Mammary epithelial cell (primary cell): ENCODE measurements at regions of chr17 and their contacts with region 1.

Region 1: DNA sequence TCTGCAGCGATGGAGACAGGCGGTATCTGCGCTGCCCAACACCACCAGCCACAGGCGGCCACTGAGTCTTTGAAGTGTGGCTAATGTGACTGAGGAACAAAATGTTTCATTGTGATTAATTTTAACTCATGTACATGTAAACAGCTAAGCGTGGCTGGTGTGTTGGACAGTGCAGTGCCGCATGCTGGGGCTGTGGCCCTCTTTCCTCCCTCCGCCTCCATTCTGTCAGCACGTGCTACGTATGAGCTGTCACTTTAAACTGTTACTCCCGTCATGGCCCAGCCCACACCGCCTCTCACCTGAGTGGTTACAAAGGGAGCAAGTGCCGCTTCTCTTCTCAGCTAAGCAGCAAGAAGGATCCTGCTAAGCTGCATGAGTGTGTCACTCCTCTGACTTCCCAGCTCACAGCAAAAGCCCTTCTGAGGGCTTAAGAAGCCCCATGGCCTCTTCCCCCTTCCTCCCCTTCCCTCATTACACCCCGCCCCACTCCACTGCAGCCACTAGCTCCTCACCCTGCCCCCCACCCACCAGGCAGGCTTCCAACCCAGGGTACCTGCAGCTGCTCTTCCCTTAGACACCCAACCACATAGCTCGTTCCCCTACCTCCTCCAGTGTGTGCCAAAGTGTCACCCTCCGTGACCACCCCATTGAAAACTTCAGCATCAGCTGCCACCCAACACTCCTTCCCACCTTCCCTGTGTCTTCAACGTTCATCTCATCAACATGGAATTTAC is 15.0 kb downstream of the HASPIN start:
- DNase-seq: peak; percentile 76
- H3K4me3 ChIP-seq: peak overlapping the region in 1 of 3 experiments; percentile 19
- H3K27ac ChIP-seq: no peak overlapping the region
- H3K4me1 ChIP-seq: peaks cover 10% of the 10 kb centered on the region
- H3K27me3 ChIP-seq: no peaks in the 10 kb centered on the region
- CTCF ChIP-seq: no peak

Region 2: DNA sequence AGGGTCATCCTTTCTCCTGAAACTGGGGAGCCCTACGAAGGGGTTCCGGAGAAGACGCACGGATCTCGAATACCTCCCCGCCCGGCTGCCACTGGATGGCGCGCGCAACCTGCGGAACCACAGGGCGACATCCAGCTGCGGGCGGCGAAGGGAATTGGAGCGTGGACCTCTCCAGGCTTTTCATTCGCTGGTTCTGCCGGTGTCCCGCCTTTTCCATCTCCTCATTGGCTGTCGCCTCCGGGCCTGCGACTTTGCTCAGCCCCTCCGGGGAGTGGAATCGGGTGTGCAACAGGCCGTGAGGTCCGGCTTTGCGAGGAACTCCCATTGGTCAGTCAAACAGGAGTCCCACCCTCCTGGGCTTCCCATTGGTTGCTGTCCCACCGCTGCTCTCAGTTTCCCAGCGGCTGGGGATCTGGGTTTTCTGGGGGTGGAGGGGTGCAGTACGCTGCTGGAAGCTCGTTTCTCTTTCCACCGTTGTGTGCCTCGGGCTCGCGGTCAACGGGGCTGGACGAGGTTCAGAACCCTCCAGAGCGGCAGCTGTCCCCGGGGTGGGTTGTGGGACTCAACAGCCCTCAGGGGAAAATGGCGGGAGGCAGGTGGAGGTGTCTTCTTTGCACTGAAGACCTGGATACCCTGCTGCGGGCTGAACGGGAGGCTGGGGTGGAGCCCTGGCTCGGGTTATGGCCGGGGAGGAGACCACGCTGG is 689.8 kb before region 1 on chr17:
- CTCF ChIA-PET with region 1: no interaction called
- dilution Hi-C with region 1: no loop called
- in situ Hi-C with region 1: loop called in 1 of 2 experiments (anchors 10 kb)
- intact Hi-C with region 1: no loop called
- DNase-seq: peak; percentile 96
- H3K4me3 ChIP-seq: peak overlapping the region; percentile 84 to 89 (median 86)
- H3K27ac ChIP-seq: peak overlapping the region; percentile 3
- H3K4me1 ChIP-seq: peaks cover 10% of the 10 kb centered on the region
- H3K27me3 ChIP-seq: no peaks in the 10 kb centered on the region
- CTCF ChIP-seq: peak; percentile 66 to 90

Region 3: GRCh38 chr17:3683054-3683511 is 55.6 kb before region 1 on chr17:
- CTCF ChIA-PET with region 1: no interaction called
- dilution Hi-C with region 1: no loop called
- in situ Hi-C with region 1: no loop called
- intact Hi-C with region 1: loop called (anchors 2 kb)
- DNase-seq: peak; percentile 19
- H3K4me3 ChIP-seq: no peak overlapping the region
- H3K27ac ChIP-seq: no peak overlapping the region
- H3K4me1 ChIP-seq: no peaks in the 10 kb centered on the region
- H3K27me3 ChIP-seq: no peaks in the 10 kb centered on the region
- CTCF ChIP-seq: peak; percentile 91 to 95

Region 4: DNA sequence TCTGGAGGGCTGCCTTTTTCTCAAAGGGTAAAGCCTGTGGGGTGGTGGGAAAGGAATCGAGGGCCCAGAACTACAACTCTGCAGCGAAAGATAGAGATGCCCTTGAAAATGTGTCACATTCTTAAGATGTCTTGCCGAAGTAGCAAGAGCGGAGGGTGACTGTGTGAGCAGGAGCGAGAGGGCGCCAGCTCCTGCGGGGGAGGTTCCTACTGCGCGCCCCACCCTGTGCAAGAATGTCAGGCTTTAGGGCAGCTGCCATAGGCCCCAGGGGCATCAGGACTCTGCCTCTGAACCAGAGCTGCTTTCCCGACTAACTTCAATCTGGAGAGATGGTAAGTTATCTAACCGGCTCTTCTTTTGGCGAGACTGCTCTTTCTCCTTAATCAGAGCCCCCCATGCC is 74.0 kb after region 1 on chr17:
- CTCF ChIA-PET with region 1: no interaction called
- dilution Hi-C with region 1: no loop called
- in situ Hi-C with region 1: loop called in 1 of 2 experiments (anchors 5 kb)
- intact Hi-C with region 1: loop called (anchors 1 kb)
- DNase-seq: no peak
- H3K4me3 ChIP-seq: no peak overlapping the region
- H3K27ac ChIP-seq: no peak overlapping the region
- H3K4me1 ChIP-seq: peaks cover 19% of the 10 kb centered on the region
- H3K27me3 ChIP-seq: no peaks in the 10 kb centered on the region
- CTCF ChIP-seq: no peak

Region 5: DNA sequence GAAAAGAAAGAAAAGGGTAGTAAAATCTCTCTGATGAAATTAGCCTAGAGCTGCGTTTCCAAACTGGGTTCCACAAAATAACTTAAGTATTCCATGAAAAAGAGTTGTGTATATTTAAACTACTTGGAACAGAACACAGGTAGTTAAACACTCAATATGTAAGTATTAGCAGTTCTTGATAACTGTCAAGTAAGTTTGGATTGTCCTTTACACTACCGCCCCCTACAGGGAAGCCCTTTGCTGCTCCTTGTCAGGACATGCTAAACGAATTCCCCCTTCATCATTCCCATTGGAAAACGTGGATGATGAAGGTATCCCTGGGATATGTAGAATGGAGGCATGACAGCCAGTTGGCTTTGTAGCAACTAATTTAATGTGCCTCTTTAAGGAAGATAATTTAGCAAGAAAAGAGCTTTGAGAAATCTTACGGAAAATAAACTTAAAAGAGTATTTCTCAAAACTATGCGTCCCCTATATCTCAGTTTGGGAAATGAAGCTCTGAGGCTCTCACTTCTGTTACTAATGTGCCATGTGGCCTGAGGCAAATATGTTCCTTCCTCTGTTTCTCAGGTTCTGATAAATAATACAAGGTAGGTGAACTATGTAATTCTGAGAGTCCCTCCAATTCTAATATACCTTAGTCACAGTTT is 88.5 kb after region 1 on chr17:
- CTCF ChIA-PET with region 1: interaction called, 3 read pairs
- dilution Hi-C with region 1: no loop called
- in situ Hi-C with region 1: loop called in 1 of 2 experiments (anchors 10 kb)
- intact Hi-C with region 1: loop called (anchors 1 kb)
- DNase-seq: peak; percentile 51
- H3K4me3 ChIP-seq: no peak overlapping the region
- H3K27ac ChIP-seq: no peak overlapping the region
- H3K4me1 ChIP-seq: no peaks in the 10 kb centered on the region
- H3K27me3 ChIP-seq: no peaks in the 10 kb centered on the region
- CTCF ChIP-seq: peak; percentile 87 to 91

Region 6: GRCh38 chr17:3913531-3914311 is 175.0 kb after region 1 on chr17:
- CTCF ChIA-PET with region 1: interaction called, 5 read pairs
- dilution Hi-C with region 1: no loop called
- in situ Hi-C with region 1: no loop called
- intact Hi-C with region 1: loop called (anchors 2 kb)
- DNase-seq: peak; percentile 35
- H3K4me3 ChIP-seq: no peak overlapping the region
- H3K27ac ChIP-seq: no peak overlapping the region
- H3K4me1 ChIP-seq: no peaks in the 10 kb centered on the region
- H3K27me3 ChIP-seq: no peaks in the 10 kb centered on the region
- CTCF ChIP-seq: peak; percentile 97 to 98